MCF 10A (cell line): ENCODE measurements at regions of chr4 and their contacts with region 1.

Region 1: GRCh38 chr4:1899149-1900086 is 28.2 kb downstream of the NSD2 start:
- DNase-seq: peak; percentile 80
- H3K4me3 Mint-ChIP-seq: no peak overlapping the region
- H3K27ac Mint-ChIP-seq: no peak overlapping the region
- H3K4me1 Mint-ChIP-seq: peaks cover 13% of the 10 kb centered on the region
- H3K27me3 Mint-ChIP-seq: no peaks in the 10 kb centered on the region
- CTCF ChIP-seq: peak; percentile 94

Region 2: DNA sequence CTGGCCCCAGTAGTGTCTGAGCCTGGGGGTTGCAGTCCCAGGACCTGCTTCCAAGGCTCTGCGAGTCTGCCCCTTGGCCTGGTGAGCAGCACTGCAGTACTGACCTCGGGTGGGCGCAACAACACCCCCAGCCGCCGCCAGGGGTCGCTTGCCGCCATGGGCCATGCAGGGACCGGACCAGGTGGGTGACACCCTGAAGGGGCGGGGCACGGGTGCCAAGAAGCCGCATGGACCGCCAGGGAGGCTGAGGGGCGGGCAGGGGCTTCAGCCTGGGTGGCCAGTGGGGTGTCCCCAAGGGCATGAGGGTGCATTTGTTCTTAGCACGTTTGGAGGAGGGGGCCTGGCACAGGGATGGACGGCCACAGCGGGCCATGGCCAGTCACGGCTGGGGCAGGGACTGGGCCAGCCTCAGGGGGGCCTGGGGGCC is 153.1 kb before region 1 on chr4:
- CTCF ChIA-PET with region 1: interaction called, 19 read pairs
- POLR2A ChIA-PET with region 1: no interaction called
- intact Hi-C with region 1: loop called (anchors 2 kb)
- DNase-seq: peak; percentile 64
- H3K4me3 Mint-ChIP-seq: no peak overlapping the region
- H3K27ac Mint-ChIP-seq: no peak overlapping the region
- H3K4me1 Mint-ChIP-seq: no peaks in the 10 kb centered on the region
- H3K27me3 Mint-ChIP-seq: no peaks in the 10 kb centered on the region
- CTCF ChIP-seq: peak; percentile 86

Region 3: GRCh38 chr4:1809754-1810511 is 89.5 kb before region 1 on chr4:
- CTCF ChIA-PET with region 1: interaction called, 10 read pairs
- POLR2A ChIA-PET with region 1: no interaction called
- intact Hi-C with region 1: loop called (anchors 10 kb)
- DNase-seq: peak; percentile 68
- H3K4me3 Mint-ChIP-seq: no peak overlapping the region
- H3K27ac Mint-ChIP-seq: no peak overlapping the region
- H3K4me1 Mint-ChIP-seq: no peaks in the 10 kb centered on the region
- H3K27me3 Mint-ChIP-seq: no peaks in the 10 kb centered on the region
- CTCF ChIP-seq: peak; percentile 89

Region 4: GRCh38 chr4:1856042-1856788 is 43.2 kb before region 1 on chr4 and contains the start of gene LETM1:
- CTCF ChIA-PET with region 1: interaction called, 49 read pairs
- POLR2A ChIA-PET with region 1: interaction called, 7 read pairs
- intact Hi-C with region 1: loop called (anchors 1 kb)
- DNase-seq: peak; percentile 93
- H3K4me3 Mint-ChIP-seq: peak within 1 kb of the TSS; percentile 83
- H3K27ac Mint-ChIP-seq: peak within 1 kb of the TSS; percentile 79
- H3K4me1 Mint-ChIP-seq: peaks cover 26% of the 10 kb centered on the region
- H3K27me3 Mint-ChIP-seq: no peaks in the 10 kb centered on the region
- CTCF ChIP-seq: peak; percentile 8
- total RNA-seq, gene LETM1: 85.0 and 86.3 TPM in 2 replicates

Region 5: GRCh38 chr4:1879485-1879884 is 19.9 kb before region 1 on chr4:
- CTCF ChIA-PET with region 1: interaction called, 27 read pairs
- POLR2A ChIA-PET with region 1: interaction called, 4 read pairs
- intact Hi-C with region 1: no loop called
- DNase-seq: no peak
- H3K4me3 Mint-ChIP-seq: no peak overlapping the region
- H3K27ac Mint-ChIP-seq: peak overlapping the region; percentile 29
- H3K4me1 Mint-ChIP-seq: peaks cover 29% of the 10 kb centered on the region
- H3K27me3 Mint-ChIP-seq: no peaks in the 10 kb centered on the region
- CTCF ChIP-seq: no peak

Region 6: GRCh38 chr4:1910643-1911042 is 11.2 kb after region 1 on chr4:
- CTCF ChIA-PET with region 1: interaction called, 79 read pairs
- POLR2A ChIA-PET with region 1: interaction called, 7 read pairs
- intact Hi-C with region 1: no loop called
- DNase-seq: peak; percentile 64
- H3K4me3 Mint-ChIP-seq: no peak overlapping the region
- H3K27ac Mint-ChIP-seq: peak overlapping the region; percentile 3
- H3K4me1 Mint-ChIP-seq: peaks cover 31% of the 10 kb centered on the region
- H3K27me3 Mint-ChIP-seq: no peaks in the 10 kb centered on the region
- CTCF ChIP-seq: peak; percentile 46

Region 7: DNA sequence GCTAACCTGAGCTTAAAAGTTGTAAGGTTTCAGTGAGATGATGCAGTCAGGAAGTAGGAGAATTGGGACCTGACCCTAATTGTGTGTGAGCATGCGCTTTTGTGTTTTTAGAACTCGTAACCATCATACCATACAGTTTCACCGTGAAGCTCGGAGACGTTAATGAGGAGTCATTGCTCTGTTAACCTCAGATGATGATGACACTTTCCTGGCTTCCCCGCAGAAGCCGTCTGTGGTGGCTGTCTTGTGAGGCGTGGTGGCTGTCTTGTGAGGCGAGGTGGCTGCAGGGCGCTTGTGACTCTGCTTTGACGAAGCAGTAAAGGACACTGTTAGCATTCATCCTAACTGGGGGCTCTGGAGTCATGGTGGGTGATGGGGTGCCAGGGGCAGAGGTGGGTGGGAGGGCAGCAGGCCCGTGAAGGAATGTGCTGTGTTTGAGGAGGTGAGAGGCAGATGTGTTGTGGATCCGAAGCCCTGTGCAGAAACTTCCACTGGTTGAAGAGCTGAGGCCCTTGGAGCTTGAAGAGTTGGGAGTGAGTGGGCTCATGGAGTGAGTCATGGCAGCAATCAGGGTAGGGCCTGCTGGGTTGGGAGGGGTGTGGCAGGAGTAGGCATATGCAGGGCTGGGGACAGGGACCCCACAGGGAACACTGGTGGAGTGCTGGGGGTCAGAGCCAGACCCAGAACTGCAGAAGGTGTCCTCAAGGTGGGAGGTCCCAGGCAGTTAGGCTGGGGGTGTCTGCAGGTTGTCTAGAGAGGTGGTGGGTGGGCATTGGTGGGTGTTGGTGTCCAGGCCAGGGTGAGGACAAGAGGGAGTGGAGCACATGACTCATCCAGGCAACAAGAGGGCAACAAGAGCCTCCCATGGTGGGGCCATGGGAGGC is 29.2 kb after region 1 on chr4:
- CTCF ChIA-PET with region 1: interaction called, 10 read pairs
- POLR2A ChIA-PET with region 1: no interaction called
- intact Hi-C with region 1: no loop called
- DNase-seq: no peak
- H3K4me3 Mint-ChIP-seq: no peak overlapping the region
- H3K27ac Mint-ChIP-seq: peak overlapping the region; percentile 62
- H3K4me1 Mint-ChIP-seq: peaks cover 9% of the 10 kb centered on the region
- H3K27me3 Mint-ChIP-seq: no peaks in the 10 kb centered on the region
- CTCF ChIP-seq: no peak